ENCODE measurements at regions of chr6 and their contacts with region 1.

Region 1: DNA sequence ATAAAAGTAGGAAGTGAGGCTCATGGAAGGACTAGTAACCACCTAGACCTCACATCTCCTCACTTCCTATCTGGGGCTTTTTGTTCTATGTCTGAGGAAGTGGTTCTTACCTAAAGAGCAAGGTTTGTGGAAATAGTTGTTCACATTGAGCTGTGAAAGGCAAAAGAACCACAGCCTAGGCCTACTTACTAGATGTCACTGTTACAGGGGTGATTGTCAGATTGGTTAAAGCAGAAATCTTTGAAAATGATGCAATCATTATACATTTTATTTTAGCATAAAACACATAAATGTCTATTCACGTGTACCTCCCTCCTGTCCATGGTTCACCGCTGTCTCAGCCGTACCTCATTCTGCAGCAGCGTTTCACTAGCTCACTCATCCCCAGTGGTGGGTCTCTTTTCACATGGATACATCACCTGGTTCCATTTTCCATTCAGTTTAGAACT is 268.8 kb downstream of the TMEM242 start:
- DNase-seq: peak; percentile 67
- H3K4me3 Mint-ChIP-seq: peak overlapping the region; percentile 29
- H3K27ac Mint-ChIP-seq: peak overlapping the region; percentile 94
- H3K4me1 Mint-ChIP-seq: peaks cover 43% of the 10 kb centered on the region
- H3K27me3 Mint-ChIP-seq: no peaks in the 10 kb centered on the region

Region 2: GRCh38 chr6:157068691-157069324 is 14.3 kb after region 1 on chr6:
- CTCF ChIA-PET with region 1: interaction called, 10 read pairs
- intact Hi-C with region 1: loop called (anchors 1 kb)
- DNase-seq: no peak
- H3K4me3 Mint-ChIP-seq: no peak overlapping the region
- H3K27ac Mint-ChIP-seq: peak overlapping the region; percentile 22
- H3K4me1 Mint-ChIP-seq: peaks cover 41% of the 10 kb centered on the region
- H3K27me3 Mint-ChIP-seq: no peaks in the 10 kb centered on the region

Region 3: DNA sequence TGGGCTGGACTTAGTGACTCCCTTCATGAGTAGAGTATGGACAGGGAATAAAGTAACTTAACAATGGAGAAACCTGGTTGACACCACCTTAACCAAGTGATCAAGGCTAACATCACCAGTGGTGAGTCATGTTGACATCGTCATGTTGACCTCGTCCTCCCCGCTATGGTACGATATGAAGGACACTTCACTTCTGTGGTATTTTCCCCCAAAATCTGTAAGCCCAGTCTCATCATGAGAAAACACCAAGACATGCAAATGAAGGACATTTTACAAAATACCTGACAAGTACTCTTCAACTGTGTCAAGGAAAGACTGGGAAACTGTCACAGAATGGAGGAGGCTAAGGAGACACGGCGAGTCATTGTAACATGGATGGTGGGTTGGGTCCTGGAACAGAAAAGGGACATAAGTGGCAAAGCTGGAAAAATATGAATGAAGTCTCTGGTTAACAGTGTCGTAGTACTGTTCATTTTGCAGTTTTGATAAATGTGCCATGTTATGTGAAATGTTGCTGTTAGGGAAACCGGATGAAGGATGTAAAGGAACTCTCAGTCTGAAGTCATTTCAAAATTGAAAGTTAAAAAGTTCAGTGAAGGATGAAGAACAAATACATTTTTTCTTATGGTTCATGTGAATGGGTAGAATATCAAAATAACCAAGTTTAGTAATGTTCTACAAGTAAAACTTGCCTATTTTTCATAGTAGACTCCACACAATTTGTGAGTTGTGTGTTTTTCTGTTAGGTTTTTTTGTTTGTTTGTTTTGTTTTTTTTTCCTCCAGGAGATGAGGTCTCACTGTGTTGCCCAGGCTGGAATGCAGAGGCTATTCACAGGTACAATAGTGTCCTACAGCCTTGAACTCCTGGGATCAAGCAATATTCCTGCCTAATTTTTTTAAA is 21.2 kb after region 1 on chr6:
- CTCF ChIA-PET with region 1: interaction called, 10 read pairs
- intact Hi-C with region 1: loop called (anchors 1 kb)
- DNase-seq: peak; percentile 61
- H3K4me3 Mint-ChIP-seq: peak overlapping the region; percentile 41
- H3K27ac Mint-ChIP-seq: peak overlapping the region; percentile 85
- H3K4me1 Mint-ChIP-seq: peaks cover 53% of the 10 kb centered on the region
- H3K27me3 Mint-ChIP-seq: no peaks in the 10 kb centered on the region

Region 4: DNA sequence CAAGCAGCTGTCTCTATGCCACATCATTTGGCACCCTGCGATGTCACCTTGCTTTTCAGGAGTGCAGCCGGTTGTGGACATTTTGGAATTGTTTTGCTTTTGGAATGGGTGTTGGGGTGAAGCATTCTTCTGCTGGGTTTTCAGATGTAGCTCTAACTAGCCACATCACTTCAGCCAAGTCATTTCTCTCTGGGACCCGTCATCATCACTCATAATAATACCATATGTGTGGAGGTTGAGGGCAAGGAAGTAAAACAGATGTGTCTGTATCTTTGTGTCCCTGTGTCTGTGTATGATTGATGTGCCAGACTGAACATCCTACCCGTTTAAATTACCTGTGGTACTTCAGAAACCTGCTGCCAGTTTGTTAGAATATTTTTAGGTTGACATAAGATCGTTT is 1208.2 kb after region 1 on chr6:
- CTCF ChIA-PET with region 1: no interaction called
- intact Hi-C with region 1: no loop called
- DNase-seq: no peak
- H3K4me3 Mint-ChIP-seq: no peak overlapping the region
- H3K27ac Mint-ChIP-seq: no peak overlapping the region
- H3K4me1 Mint-ChIP-seq: peaks cover 4% of the 10 kb centered on the region
- H3K27me3 Mint-ChIP-seq: no peaks in the 10 kb centered on the region